ENCODE measurements at regions of chr1 and their contacts with region 1.

Region 1: DNA sequence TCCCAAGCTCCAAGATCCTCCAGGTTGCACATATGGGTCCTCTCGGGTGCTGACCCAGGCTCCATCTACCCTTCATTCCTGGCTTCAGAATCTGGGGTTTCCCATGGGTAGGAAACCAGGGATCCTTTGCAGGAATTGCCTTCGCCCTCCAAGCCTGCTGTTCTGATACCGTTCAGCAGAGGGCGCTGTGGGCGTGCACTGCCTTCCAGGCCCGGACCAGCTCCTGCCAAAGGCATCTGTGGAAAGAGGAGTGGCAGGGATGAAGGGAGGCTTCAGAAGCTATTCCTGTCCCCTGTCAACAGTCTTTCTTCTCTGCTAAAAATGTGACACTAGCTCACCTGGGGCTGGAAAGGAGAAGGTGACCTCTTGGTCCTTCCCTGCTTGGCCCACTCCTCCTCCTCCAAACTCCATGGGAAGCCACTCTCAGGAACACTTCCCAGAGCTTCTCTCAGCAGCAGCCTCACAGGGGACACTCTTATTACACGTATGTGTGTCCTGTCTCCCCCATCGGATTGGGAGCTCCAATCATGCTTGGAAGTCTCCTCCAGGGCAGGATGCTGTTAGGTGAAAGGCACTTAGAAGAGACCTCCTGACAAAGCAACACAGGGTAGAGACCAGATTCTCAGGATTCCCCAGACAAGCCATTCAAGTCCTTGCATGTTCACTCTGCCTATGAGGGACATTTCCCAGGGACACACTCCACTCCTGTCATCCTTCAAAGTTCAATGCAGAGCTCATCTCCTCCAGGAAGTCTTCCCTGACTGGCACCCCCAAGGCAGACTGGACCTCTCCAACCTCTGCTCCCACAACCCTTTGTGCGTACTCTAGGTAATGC is 71.3 kb downstream of the VWA5B1 start:
- DNase-seq: peak; percentile 77

Region 2: GRCh38 chr1:20376880-20377494 is 15.0 kb after region 1 on chr1:
- CTCF ChIA-PET with region 1: interaction called, 20 read pairs
- POLR2A ChIA-PET with region 1: no interaction called
- DNase-seq: peak; percentile 81

Measured in HEK293T (cell line).